Activated T-helper 1 cell treated with anti-CD3 and anti-CD28 coated beads, Interleukin-12 subunit alpha, Interleukin-12 subunit beta, Interleukin-2, Interleukin-4 antibody, amounts not matched to agents 30 ng/mL and 10 ng/mL and 1 ng/mL, durations not matched to agents 14 hours and 24 hours and 36 hours (primary cell): ENCODE measurements at regions of chr12 and their contacts with region 1.

Region 1: DNA sequence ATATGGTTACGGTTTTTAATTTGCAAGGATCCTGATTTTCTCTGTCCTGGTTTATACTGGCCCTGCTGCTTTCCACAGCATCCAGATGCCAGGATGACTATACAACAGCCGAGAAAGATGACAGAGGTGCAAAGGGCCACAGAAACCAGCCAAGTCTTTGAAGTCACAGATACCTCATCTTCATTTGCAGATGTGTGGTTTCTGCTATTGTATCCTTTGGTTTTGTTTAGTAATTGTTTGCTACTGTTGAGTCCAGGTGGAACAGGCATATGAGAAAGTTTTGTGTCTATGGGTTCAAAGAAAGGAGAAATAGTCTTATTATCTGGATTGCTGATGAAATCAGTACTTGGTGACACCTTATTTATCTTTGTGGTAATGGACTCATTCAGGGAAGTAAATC is 17.3 kb upstream of the KLHL42 start:
- DNase-seq: no peak
- H3K4me3 Mint-ChIP-seq: no peak overlapping the region
- H3K27ac Mint-ChIP-seq: no peak overlapping the region
- H3K4me1 Mint-ChIP-seq: peaks cover 11% of the 10 kb centered on the region
- H3K27me3 Mint-ChIP-seq: peaks cover 3% of the 10 kb centered on the region

Region 2: GRCh38 chr12:27779920-27780611 is 17.3 kb after region 1 on chr12 and contains the starts of genes KLHL42 and MANSC4:
- intact Hi-C with region 1: loop called (anchors 1 kb)
- DNase-seq: peak; percentile 62
- H3K4me3 Mint-ChIP-seq: peak within 1 kb of the TSS; percentile 84
- H3K27ac Mint-ChIP-seq: peak within 1 kb of the TSS; percentile 75
- H3K4me1 Mint-ChIP-seq: peaks cover 30% of the 10 kb centered on the region
- H3K27me3 Mint-ChIP-seq: peaks cover 19% of the 10 kb centered on the region
- total RNA-seq, gene KLHL42: 19.5 and 21.7 TPM in 2 replicates
- total RNA-seq, gene MANSC4: not detected in 2 replicates

Region 3: GRCh38 chr12:27794818-27795584 is 32.2 kb after region 1 on chr12:
- intact Hi-C with region 1: loop called (anchors 2 kb)
- DNase-seq: no peak
- H3K4me3 Mint-ChIP-seq: no peak overlapping the region
- H3K27ac Mint-ChIP-seq: peak overlapping the region; percentile 72
- H3K4me1 Mint-ChIP-seq: peaks cover 19% of the 10 kb centered on the region
- H3K27me3 Mint-ChIP-seq: no peaks in the 10 kb centered on the region

Region 4: GRCh38 chr12:27807063-27807703 is 44.4 kb after region 1 on chr12:
- intact Hi-C with region 1: loop called (anchors 2 kb)
- DNase-seq: no peak
- H3K4me3 Mint-ChIP-seq: no peak overlapping the region
- H3K27ac Mint-ChIP-seq: peak overlapping the region; percentile 53
- H3K4me1 Mint-ChIP-seq: peaks cover 36% of the 10 kb centered on the region
- H3K27me3 Mint-ChIP-seq: peaks cover 11% of the 10 kb centered on the region

Region 5: GRCh38 chr12:27859648-27860047 is 96.9 kb after region 1 on chr12:
- intact Hi-C with region 1: no loop called
- DNase-seq: no peak
- H3K4me3 Mint-ChIP-seq: no peak overlapping the region
- H3K27ac Mint-ChIP-seq: no peak overlapping the region
- H3K4me1 Mint-ChIP-seq: peaks cover 5% of the 10 kb centered on the region
- H3K27me3 Mint-ChIP-seq: peaks cover 5% of the 10 kb centered on the region

Region 6: DNA sequence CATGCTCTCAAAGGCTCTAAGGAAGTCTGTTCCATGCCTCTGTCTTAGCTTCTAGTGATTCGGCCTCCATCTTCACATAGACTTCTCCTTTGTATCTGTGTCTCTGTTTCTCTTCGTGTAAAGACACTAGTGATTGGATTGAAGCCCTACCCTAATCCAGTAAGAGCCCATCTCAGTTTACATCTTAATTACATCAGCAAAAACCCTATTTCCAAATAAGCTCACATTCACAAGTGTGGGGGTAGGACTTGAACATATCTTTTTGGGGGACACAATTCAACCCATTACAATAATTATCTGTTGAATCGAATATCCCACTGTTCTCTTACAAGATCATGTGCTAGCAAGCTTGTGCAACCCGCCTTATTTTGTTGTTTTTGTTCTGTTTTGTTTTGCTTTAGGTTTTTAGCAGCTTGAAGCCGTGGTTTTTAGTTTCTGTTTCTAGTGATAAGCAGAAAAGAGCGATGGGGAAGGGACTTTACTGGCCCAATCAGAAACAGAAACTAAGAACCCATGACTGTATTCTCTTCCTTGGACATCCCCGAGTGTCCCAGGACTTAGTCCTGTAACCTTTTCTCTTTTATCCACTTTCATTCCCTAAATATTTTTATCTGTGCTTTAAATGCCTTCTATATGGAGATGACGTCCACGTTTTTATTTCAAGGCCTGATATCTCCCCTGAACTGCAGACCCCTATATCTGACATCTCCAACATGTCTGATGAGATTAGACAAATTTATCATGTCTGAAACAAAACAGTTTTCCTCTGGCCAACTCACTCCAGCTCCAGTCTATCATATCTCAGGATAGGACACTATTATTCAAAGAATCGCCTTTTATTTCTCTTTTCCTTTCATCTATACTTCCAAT is 780.5 kb after region 1 on chr12:
- intact Hi-C with region 1: no loop called
- DNase-seq: no peak
- H3K4me3 Mint-ChIP-seq: peak overlapping the region; percentile 28
- H3K27ac Mint-ChIP-seq: peak overlapping the region; percentile 74
- H3K4me1 Mint-ChIP-seq: peaks cover 25% of the 10 kb centered on the region
- H3K27me3 Mint-ChIP-seq: no peaks in the 10 kb centered on the region